Gastrocnemius medialis (tissue), 4 donors: ENCODE measurements at regions of chr17 and their contacts with region 1.

Region 1: GRCh38 chr17:42997984-42998938 is at the start of gene RPL27:
- DNase-seq: peak; percentile 98 to 99
- ATAC-seq: peak; percentile 99
- H3K4me3 ChIP-seq: peak within 1 kb of the TSS; percentile 84 to 92 (median 88)
- H3K27ac ChIP-seq: peak within 1 kb of the TSS; percentile 84 to 94 (median 91)
- H3K4me1 ChIP-seq: peaks cover 16 to 18% of the 10 kb centered on the region in 2 donors
- H3K27me3 ChIP-seq: no peaks in the 10 kb centered on the region
- CTCF ChIP-seq: peak; percentile 91 to 97 (median 93)
- POLR2A ChIP-seq: peak; percentile 90 to 91
- total RNA-seq, gene RPL27: 800 to 1,300 (median 1,077) TPM

Region 2: GRCh38 chr17:42832974-42833766 is 165.1 kb before region 1 on chr17 and contains the start of gene PSME3:
- in situ Hi-C with region 1: no loop called
- intact Hi-C with region 1: loop called (anchors 5 kb)
- DNase-seq: peak; percentile 79 to 83
- ATAC-seq: peak; percentile 95 to 97
- H3K4me3 ChIP-seq: peak within 1 kb of the TSS; percentile 77 to 97 (median 96)
- H3K27ac ChIP-seq: peak within 1 kb of the TSS; percentile 80 to 94 (median 89)
- H3K4me1 ChIP-seq: peaks cover 18 to 27% of the 10 kb centered on the region in 2 donors
- H3K27me3 ChIP-seq: no peaks in the 10 kb centered on the region
- CTCF ChIP-seq: peak in 1 of 5 experiments; percentile 34
- POLR2A ChIP-seq: peak; percentile 96 to 98
- total RNA-seq, gene PSME3: 84.2 to 101 (median 88.7) TPM

Region 3: DNA sequence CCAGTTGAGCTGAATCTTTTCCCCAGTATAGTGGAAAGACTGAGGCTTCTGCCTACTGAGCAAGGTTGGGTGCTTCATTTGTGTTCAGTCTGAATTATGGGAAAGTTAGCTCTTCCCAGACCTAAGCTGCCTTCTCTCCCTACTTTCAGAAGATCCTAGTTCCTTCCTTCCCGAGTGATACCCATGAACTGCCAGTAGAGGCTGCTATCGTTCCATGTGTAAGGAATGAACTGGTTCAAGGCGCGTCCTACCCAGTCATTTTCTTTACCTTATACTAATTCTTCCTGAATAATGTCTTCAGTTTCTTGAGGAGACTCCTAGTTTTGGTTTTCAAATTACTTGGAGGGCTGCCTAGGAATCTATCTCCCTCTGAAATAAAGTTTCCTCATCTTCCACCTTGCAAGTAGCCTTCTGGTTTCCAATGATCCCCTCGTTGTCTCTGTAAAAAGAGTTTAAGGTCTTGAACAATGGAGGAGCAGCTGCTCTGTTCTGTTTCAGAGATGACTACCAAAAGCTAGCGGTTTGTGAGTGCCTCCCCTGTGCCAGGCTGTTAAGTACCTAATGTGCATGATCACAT is 154.8 kb before region 1 on chr17:
- in situ Hi-C with region 1: no loop called
- intact Hi-C with region 1: loop called (anchors 1 kb)
- DNase-seq: no peak
- ATAC-seq: peak; percentile 58 to 83
- H3K4me3 ChIP-seq: no peak overlapping the region
- H3K27ac ChIP-seq: no peak overlapping the region
- H3K4me1 ChIP-seq: no peaks in the 10 kb centered on the region
- H3K27me3 ChIP-seq: no peaks in the 10 kb centered on the region
- CTCF ChIP-seq: peak; percentile 83 to 91 (median 89)
- POLR2A ChIP-seq: no peak

Region 4: GRCh38 chr17:42980398-42981397 is 17.6 kb before region 1 on chr17 and contains the start of gene RUNDC1:
- in situ Hi-C with region 1: no loop called
- intact Hi-C with region 1: loop called (anchors 1 kb)
- DNase-seq: peak; percentile 79 to 87
- ATAC-seq: peak; percentile 76 to 82
- H3K4me3 ChIP-seq: peak within 1 kb of the TSS; percentile 78 to 91 (median 86)
- H3K27ac ChIP-seq: peak within 1 kb of the TSS; percentile 96 to 98 (median 98)
- H3K4me1 ChIP-seq: peaks cover 12 to 23% of the 10 kb centered on the region in 2 donors
- H3K27me3 ChIP-seq: no peaks in the 10 kb centered on the region
- CTCF ChIP-seq: peak in 4 of 5 experiments; percentile 13 to 33 (median 26)
- POLR2A ChIP-seq: peak; percentile 27 to 41
- total RNA-seq, gene RUNDC1: 13.8 to 19.8 (median 16.4) TPM

Region 5: DNA sequence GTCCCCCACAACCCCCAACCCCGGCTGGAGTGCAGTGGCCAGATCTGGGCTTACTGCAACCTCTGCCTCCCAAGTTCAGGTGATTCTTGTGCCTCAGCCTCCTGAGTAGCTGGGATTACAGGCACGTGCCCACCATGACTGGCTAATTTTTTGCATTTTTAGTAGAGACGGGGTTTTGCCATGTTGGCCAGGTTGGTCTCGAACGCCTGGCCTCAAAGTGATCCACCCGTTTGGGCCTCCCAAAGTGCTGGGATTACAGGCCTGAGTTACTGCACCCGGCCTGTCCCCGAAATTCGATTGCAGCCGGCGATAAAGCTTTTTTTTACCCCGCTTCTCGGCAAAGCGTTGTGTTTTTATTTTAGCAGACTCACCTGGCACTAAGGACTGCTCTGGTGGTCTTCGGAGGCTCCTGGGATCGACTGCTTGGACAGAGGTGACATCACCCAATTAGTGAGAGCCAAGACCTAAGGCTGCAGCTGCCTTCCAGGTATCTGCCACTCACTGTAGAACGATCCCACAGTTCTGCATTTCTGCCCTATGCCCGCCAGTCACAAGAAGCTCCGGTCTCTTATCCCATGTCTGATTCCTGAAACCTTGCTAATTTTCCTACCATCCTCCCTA is 318.4 kb after region 1 on chr17:
- in situ Hi-C with region 1: loop called in 1 of 4 experiments (anchors 25 kb)
- intact Hi-C with region 1: loop called (anchors 10 kb)
- DNase-seq: no peak
- ATAC-seq: no peak
- H3K4me3 ChIP-seq: no peak overlapping the region
- H3K27ac ChIP-seq: no peak overlapping the region
- H3K4me1 ChIP-seq: no peaks in the 10 kb centered on the region
- H3K27me3 ChIP-seq: no peaks in the 10 kb centered on the region
- CTCF ChIP-seq: no peak
- POLR2A ChIP-seq: no peak